Mammary epithelial cell (primary cell): ENCODE measurements at regions of chr15 and their contacts with region 1.

Region 1: DNA sequence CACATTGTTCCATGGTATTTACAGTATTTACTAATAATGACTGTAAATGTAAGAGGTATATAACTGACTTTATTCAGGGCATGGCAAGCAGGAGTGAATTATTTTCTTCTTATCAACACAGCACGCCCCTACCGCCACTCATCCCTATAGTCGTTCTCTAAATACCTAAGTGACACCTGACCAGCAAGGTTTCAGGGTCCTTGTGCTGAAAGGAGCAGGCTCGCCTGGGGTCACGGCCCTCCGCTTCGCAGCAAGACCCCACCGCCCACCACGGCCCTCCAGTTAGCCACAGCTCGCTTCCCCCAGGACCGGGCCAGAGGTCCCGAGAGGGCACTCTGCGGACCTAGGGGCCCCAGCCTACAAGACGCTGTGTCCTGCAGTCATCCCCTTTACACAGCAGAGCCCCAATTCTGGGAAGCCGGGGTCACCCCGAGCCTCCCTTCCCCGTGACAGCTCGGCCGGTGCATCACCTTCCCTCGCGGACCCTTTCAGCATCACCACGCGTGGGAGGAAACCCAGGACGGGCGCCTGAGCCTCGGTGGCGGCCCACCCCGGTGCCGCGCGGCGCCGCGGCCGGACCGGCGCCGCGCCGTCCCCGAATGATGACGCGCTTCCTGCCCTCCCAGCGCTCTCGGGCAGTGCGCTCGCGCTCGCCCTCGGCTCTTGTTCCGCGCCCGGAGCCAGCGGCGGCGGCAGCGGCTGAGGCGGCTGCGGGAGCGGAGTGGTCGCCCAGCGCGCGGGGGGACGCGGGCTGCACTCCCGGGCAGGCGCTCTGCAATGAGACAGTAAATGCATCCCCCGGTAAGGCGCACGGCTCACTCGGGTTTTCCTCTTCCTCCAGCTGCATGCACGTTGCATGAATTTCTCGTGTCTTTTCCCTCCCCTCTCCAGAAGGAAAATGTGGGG is 225.1 kb upstream of the C2CD4B start:
- DNase-seq: peak; percentile 69
- H3K4me3 ChIP-seq: peak within 1 kb of the TSS; percentile 68 to 97 (median 91)
- H3K27ac ChIP-seq: peak within 1 kb of the TSS; percentile 68
- H3K4me1 ChIP-seq: peaks cover 15% of the 10 kb centered on the region
- H3K27me3 ChIP-seq: no peaks in the 10 kb centered on the region
- CTCF ChIP-seq: no peak

Region 2: DNA sequence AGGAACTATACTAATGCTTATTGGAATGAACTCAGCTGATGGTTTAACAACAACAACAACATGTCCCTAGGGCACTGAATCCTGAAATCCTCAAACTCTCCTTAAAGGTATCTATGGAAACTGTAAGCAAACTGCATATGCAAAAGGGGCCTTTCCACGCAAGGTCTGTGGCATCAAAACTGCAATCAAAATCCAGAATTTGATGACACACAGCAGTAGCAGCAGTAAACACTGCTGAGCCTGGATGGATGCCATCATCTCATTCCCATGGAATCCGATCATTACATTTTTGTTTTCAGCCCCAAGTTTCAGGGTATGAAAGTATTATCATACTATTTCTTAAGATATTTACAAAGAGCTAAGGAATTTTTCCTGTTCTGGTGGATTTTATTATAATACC is 729.6 kb before region 1 on chr15:
- CTCF ChIA-PET with region 1: no interaction called
- dilution Hi-C with region 1: no loop called
- in situ Hi-C with region 1: no loop called
- intact Hi-C with region 1: no loop called
- DNase-seq: peak; percentile 8
- H3K4me3 ChIP-seq: no peak overlapping the region
- H3K27ac ChIP-seq: no peak overlapping the region
- H3K4me1 ChIP-seq: no peaks in the 10 kb centered on the region
- H3K27me3 ChIP-seq: no peaks in the 10 kb centered on the region
- CTCF ChIP-seq: no peak

Region 3: GRCh38 chr15:62453981-62454380 is 63.8 kb after region 1 on chr15:
- CTCF ChIA-PET with region 1: no interaction called
- dilution Hi-C with region 1: no loop called
- in situ Hi-C with region 1: no loop called
- intact Hi-C with region 1: loop called (anchors 5 kb)
- DNase-seq: peak; percentile 57
- H3K4me3 ChIP-seq: no peak overlapping the region
- H3K27ac ChIP-seq: no peak overlapping the region
- H3K4me1 ChIP-seq: peaks cover 27% of the 10 kb centered on the region
- H3K27me3 ChIP-seq: no peaks in the 10 kb centered on the region
- CTCF ChIP-seq: no peak

Region 4: GRCh38 chr15:62549345-62549970 is 159.3 kb after region 1 on chr15:
- CTCF ChIA-PET with region 1: interaction called, 3 read pairs
- dilution Hi-C with region 1: no loop called
- in situ Hi-C with region 1: no loop called
- intact Hi-C with region 1: loop called (anchors 1 kb)
- DNase-seq: peak; percentile 9
- H3K4me3 ChIP-seq: no peak overlapping the region
- H3K27ac ChIP-seq: no peak overlapping the region
- H3K4me1 ChIP-seq: peaks cover 8% of the 10 kb centered on the region
- H3K27me3 ChIP-seq: no peaks in the 10 kb centered on the region
- CTCF ChIP-seq: peak; percentile 73 to 85

Region 5: GRCh38 chr15:62618432-62618831 is 228.3 kb after region 1 on chr15:
- CTCF ChIA-PET with region 1: no interaction called
- dilution Hi-C with region 1: no loop called
- in situ Hi-C with region 1: no loop called
- intact Hi-C with region 1: loop called (anchors 5 kb)
- DNase-seq: peak; percentile 88
- H3K4me3 ChIP-seq: no peak overlapping the region
- H3K27ac ChIP-seq: peak overlapping the region; percentile 13
- H3K4me1 ChIP-seq: peaks cover 30% of the 10 kb centered on the region
- H3K27me3 ChIP-seq: no peaks in the 10 kb centered on the region
- CTCF ChIP-seq: peak; percentile 36 to 63

Region 6: DNA sequence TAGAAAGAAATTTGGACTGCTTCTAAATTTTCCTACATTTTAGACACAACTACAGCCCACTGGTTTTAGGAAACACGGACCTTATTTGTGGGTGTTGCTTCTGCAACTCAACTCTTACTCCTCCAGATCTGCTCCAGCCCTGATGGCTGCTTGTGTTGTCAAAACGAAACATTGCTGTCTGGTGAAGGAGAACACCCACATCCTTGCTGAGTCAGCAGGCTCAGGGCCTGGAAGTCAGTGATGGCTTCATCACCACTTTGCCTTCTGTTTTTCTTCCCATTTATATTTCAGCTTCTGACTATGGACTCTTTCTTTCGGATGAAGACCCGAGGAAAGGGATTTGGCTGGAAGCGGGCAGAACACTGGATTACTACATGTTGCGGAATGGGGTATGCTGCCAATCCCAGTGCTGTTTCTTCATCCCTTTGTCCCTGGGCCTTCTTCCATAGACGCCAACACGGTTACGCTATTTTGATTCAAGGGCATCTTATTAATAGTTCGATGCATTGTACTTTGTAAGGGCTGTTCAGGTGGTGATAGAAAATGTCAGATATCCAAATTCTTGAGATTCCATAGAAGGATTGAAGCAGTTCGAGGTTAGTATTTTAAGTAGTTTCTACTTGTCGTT is 259.8 kb after region 1 on chr15:
- CTCF ChIA-PET with region 1: no interaction called
- dilution Hi-C with region 1: no loop called
- in situ Hi-C with region 1: no loop called
- intact Hi-C with region 1: loop called (anchors 1 kb)
- DNase-seq: peak; percentile 12
- H3K4me3 ChIP-seq: no peak overlapping the region
- H3K27ac ChIP-seq: no peak overlapping the region
- H3K4me1 ChIP-seq: peaks cover 15% of the 10 kb centered on the region
- H3K27me3 ChIP-seq: no peaks in the 10 kb centered on the region
- CTCF ChIP-seq: no peak

Region 7: GRCh38 chr15:62676891-62677290 is 286.8 kb after region 1 on chr15:
- CTCF ChIA-PET with region 1: no interaction called
- dilution Hi-C with region 1: no loop called
- in situ Hi-C with region 1: no loop called
- intact Hi-C with region 1: no loop called
- DNase-seq: no peak
- H3K4me3 ChIP-seq: no peak overlapping the region
- H3K27ac ChIP-seq: no peak overlapping the region
- H3K4me1 ChIP-seq: no peaks in the 10 kb centered on the region
- H3K27me3 ChIP-seq: no peaks in the 10 kb centered on the region
- CTCF ChIP-seq: no peak

Region 8: DNA sequence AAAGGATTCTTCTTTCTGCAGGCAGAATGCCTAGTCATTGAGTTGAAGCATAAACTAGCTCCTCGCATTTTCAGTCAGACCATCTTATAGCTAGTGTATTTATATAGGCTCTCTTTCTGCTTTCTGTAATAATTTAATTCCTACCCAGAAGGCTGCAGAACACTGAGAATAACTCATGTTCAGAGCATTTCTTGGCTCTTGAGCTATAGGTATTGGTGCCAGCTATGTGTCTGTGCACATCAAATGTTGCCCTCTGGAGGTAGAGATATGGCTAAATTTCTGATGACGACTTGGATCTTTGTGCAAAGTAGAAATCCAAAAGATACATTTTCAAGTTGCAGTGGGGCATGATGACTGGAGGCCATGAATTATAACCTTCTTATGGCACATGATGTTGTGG is 316.2 kb after region 1 on chr15:
- CTCF ChIA-PET with region 1: no interaction called
- dilution Hi-C with region 1: no loop called
- in situ Hi-C with region 1: no loop called
- intact Hi-C with region 1: loop called (anchors 10 kb)
- DNase-seq: peak; percentile 18
- H3K4me3 ChIP-seq: no peak overlapping the region
- H3K27ac ChIP-seq: no peak overlapping the region
- H3K4me1 ChIP-seq: no peaks in the 10 kb centered on the region
- H3K27me3 ChIP-seq: no peaks in the 10 kb centered on the region
- CTCF ChIP-seq: peak; percentile 15 to 34

Region 9: GRCh38 chr15:62742409-62743171 is 352.5 kb after region 1 on chr15:
- CTCF ChIA-PET with region 1: interaction called, 4 read pairs
- dilution Hi-C with region 1: no loop called
- in situ Hi-C with region 1: loop called in 1 of 2 experiments (anchors 25 kb)
- intact Hi-C with region 1: loop called (anchors 1 kb)
- DNase-seq: peak; percentile 70
- H3K4me3 ChIP-seq: no peak overlapping the region
- H3K27ac ChIP-seq: peak overlapping the region; percentile 38
- H3K4me1 ChIP-seq: peaks cover 55% of the 10 kb centered on the region
- H3K27me3 ChIP-seq: no peaks in the 10 kb centered on the region
- CTCF ChIP-seq: peak; percentile 83 to 85